Activated B cell treated with CpG ODN at 0.5 μM for 24 hours (primary cell): ENCODE measurements at regions of chr10 and their contacts with region 1.

Region 1: GRCh38 chr10:80187465-80188409 is 17.6 kb downstream of the ANXA11 start:
- DNase-seq: peak; percentile 57
- ATAC-seq: peak; percentile 91
- H3K4me3 Mint-ChIP-seq: peak overlapping the region; percentile 68
- H3K27ac Mint-ChIP-seq: peak overlapping the region; percentile 91
- H3K4me1 Mint-ChIP-seq: peaks cover 82% of the 10 kb centered on the region
- H3K27me3 Mint-ChIP-seq: no peaks in the 10 kb centered on the region
- CTCF ChIP-seq: no peak

Region 2: DNA sequence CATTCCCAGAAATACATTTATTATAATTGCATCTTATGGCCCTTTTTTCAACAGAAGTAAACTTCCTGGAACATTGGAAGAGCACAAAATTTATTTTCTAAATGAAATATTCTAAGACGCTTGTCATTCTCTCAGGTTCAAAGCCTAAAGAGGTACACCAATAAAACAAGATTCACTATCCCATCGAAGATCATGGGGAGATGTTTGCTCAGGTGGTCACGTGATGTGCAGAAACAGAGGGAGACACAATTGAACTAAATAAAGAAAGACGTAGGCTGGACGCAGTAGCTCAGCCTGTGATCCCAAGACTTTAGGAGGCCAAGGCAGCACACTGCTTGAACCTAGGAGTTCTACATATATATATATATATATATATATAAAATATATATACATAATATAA is 155.2 kb before region 1 on chr10:
- CTCF ChIA-PET with region 1: no interaction called
- POLR2A ChIA-PET with region 1: no interaction called
- intact Hi-C with region 1: no loop called
- DNase-seq: no peak
- ATAC-seq: no peak
- H3K4me3 Mint-ChIP-seq: no peak overlapping the region
- H3K27ac Mint-ChIP-seq: no peak overlapping the region
- H3K4me1 Mint-ChIP-seq: peaks cover 3% of the 10 kb centered on the region
- H3K27me3 Mint-ChIP-seq: no peaks in the 10 kb centered on the region
- CTCF ChIP-seq: no peak

Region 3: DNA sequence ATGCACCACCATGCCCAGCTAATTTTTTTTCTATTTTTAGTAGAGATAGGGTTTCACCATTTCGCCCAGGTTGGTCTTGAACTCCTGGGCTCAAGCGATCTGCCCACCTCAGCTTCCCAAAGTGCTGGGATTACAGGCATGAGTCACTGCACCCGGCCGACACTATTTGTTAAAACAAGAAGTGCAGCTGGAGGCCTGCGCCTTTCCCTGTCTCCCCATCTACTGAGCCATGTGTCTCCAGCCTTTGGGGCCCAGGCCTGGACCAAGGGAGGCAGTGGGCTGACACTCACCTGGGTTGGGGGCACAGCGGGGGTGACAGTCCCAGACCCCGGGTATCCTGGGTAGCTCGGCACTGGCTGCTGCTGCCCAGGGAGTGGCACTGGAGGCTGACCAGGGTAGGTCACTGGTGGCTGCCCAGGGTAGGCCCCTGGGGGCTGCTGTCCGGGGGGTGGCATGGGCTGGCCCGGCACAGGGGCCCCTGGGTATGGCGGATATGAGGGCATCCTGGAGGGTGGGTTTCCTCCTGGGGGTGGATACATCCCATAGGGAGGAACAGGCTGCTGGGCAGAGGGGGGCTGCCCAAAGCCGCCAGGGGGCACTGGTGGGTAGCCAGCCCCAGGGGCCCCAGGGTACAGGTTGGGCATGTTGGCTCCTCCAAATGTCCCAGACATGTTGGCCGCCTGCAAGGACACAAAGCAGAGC is 18.9 kb before region 1 on chr10:
- CTCF ChIA-PET with region 1: no interaction called
- POLR2A ChIA-PET with region 1: interaction called, 4 read pairs
- intact Hi-C with region 1: loop called (anchors 2 kb)
- DNase-seq: no peak
- ATAC-seq: peak; percentile 34
- H3K4me3 Mint-ChIP-seq: no peak overlapping the region
- H3K27ac Mint-ChIP-seq: no peak overlapping the region
- H3K4me1 Mint-ChIP-seq: peaks cover 9% of the 10 kb centered on the region
- H3K27me3 Mint-ChIP-seq: no peaks in the 10 kb centered on the region
- CTCF ChIP-seq: no peak